A673 (cell line): ENCODE measurements at regions of chr1 and their contacts with region 1.

Region 1: GRCh38 chr1:7912743-7913557 is 27.7 kb downstream of the TNFRSF9 start:
- DNase-seq: no peak
- H3K4me3 ChIP-seq: no peak overlapping the region
- H3K27ac ChIP-seq: no peak overlapping the region
- H3K4me1 ChIP-seq: no peaks in the 10 kb centered on the region
- H3K27me3 ChIP-seq: no peaks in the 10 kb centered on the region
- CTCF ChIP-seq: no peak

Region 2: DNA sequence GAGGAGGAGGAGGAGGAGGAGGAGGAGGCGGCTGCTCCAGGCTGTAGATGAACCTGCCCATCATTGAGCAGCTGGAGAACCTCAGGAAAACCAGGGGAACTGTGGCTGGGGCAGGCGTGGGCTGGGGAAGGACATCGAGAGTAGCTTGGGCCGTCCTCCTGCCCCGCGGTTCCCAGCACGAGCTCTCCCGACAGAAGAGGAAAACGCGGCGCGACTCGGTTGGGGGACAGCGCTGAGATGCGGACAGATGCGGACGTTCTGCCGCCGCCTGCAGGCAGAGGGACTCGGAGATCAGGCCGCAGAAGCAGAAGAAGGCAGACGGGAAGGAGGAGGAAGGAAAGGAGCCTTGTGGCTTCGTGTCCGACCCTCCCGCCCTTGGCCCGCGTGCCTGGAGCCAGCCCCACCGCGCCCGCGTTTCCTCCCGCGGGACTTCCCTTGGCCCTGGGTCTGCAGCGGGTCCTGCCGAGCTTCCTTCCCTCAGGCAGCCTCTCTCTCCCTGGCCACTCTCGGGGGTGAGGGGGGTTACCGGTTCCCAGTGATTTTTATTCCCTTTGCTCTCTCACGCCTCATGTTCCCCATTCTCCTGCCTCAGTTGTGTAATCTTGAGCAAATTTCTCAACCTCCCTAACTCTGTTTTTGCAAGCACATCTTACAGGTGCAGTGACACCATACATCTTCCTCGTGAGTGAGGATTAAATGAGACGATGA is 29.4 kb after region 1 on chr1:
- CTCF ChIA-PET with region 1: interaction called, 10 read pairs
- POLR2A ChIA-PET with region 1: no interaction called
- intact Hi-C with region 1: no loop called
- DNase-seq: peak; percentile 73
- H3K4me3 ChIP-seq: peak overlapping the region; percentile 16
- H3K27ac ChIP-seq: no peak overlapping the region
- H3K4me1 ChIP-seq: no peaks in the 10 kb centered on the region
- H3K27me3 ChIP-seq: peaks cover 15% of the 10 kb centered on the region
- CTCF ChIP-seq: no peak; the same call in 1 of the 2 replicates